ENCODE measurements at regions of chr16 and their contacts with region 1.

Region 1: GRCh38 chr16:58392215-58393137 is at the start of gene GINS3:
- DNase-seq: peak; percentile 96
- H3K4me3 Mint-ChIP-seq: peak within 1 kb of the TSS; percentile 98
- H3K27ac Mint-ChIP-seq: peak within 1 kb of the TSS; percentile 96
- H3K4me1 Mint-ChIP-seq: peaks cover 17% of the 10 kb centered on the region
- H3K27me3 Mint-ChIP-seq: peaks cover 16% of the 10 kb centered on the region
- total RNA-seq, gene GINS3: 24.1 and 25.0 TPM in 2 replicates

Region 2: GRCh38 chr16:58494981-58495520 is 102.6 kb after region 1 on chr16:
- intact Hi-C with region 1: loop called (anchors 2 kb)
- DNase-seq: peak; percentile 92
- H3K4me3 Mint-ChIP-seq: peak overlapping the region; percentile 45
- H3K27ac Mint-ChIP-seq: peak overlapping the region; percentile 85
- H3K4me1 Mint-ChIP-seq: peaks cover 7% of the 10 kb centered on the region
- H3K27me3 Mint-ChIP-seq: no peaks in the 10 kb centered on the region

Measured in activated CD4-positive, alpha-beta T cell treated with anti-CD3 and anti-CD28 coated beads, Interleukin-2, amount 10 ng/mL, durations not matched to agents 24 days and 14 days (primary cell).